IMR-90 (cell line): ENCODE measurements at regions of chr1 and their contacts with region 1.

Region 1: DNA sequence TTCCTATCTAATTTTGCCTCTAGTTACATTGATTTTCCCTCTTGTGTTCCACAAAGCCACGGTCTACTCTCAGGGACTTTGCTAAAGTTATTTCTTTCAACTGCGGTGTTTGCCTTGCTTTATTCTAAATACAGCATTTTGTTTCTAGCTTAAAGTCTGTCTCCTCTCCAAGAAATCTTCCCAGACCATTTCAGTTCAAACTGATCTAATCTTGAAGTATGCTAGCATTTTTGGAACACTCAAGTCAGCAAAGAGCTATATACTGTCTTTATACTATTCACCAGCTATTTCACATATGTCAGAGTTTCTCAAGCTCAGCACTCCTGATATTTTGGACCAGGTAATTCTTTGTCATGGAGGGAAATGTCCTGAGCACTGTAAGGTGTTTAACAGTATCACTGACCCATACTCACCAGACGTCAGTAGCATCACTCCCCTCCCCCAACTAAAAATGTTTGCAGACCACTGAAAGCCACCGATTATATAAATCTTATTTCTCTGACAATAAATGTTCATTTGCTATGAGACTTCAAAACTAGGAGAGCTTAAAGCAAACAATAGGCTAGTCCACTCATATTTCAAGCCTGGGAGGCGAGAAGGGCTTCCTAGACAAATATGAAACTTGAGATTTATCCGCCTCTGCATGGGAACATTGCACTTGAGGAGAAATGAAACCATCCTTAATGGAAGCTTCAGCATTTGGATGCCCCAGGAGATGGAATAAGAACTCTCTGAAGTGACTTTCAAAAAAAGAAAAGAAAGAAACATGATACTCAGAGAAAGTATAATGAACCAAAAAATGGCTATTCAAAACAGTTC is 81.1 kb downstream of the KIAA0319L start:
- DNase-seq: peak; percentile 6
- ATAC-seq: no peak
- H3K4me3 ChIP-seq: no peak overlapping the region
- H3K27ac ChIP-seq: no peak overlapping the region
- H3K4me1 ChIP-seq: no peaks in the 10 kb centered on the region
- H3K27me3 ChIP-seq: no peaks in the 10 kb centered on the region
- CTCF ChIP-seq: no peak
- POLR2A ChIP-seq: no peak
- RAD21 ChIP-seq: no peak

Region 2: GRCh38 chr1:35488336-35488735 is 12.3 kb after region 1 on chr1:
- CTCF ChIA-PET with region 1: no interaction called
- POLR2A ChIA-PET with region 1: no interaction called
- dilution Hi-C with region 1: no loop called
- in situ Hi-C with region 1: no loop called
- intact Hi-C with region 1: loop called (anchors 2 kb)
- DNase-seq: peak; percentile 3
- ATAC-seq: no peak
- H3K4me3 ChIP-seq: no peak overlapping the region
- H3K27ac ChIP-seq: no peak overlapping the region
- H3K4me1 ChIP-seq: peaks cover 1% of the 10 kb centered on the region; the same call in 1 of the 2 replicates
- H3K27me3 ChIP-seq: no peaks in the 10 kb centered on the region
- CTCF ChIP-seq: no peak
- POLR2A ChIP-seq: no peak
- RAD21 ChIP-seq: no peak